Esophagus muscularis mucosa (tissue), 4 donors: ENCODE measurements at regions of chr4 and their contacts with region 1.

Region 1: DNA sequence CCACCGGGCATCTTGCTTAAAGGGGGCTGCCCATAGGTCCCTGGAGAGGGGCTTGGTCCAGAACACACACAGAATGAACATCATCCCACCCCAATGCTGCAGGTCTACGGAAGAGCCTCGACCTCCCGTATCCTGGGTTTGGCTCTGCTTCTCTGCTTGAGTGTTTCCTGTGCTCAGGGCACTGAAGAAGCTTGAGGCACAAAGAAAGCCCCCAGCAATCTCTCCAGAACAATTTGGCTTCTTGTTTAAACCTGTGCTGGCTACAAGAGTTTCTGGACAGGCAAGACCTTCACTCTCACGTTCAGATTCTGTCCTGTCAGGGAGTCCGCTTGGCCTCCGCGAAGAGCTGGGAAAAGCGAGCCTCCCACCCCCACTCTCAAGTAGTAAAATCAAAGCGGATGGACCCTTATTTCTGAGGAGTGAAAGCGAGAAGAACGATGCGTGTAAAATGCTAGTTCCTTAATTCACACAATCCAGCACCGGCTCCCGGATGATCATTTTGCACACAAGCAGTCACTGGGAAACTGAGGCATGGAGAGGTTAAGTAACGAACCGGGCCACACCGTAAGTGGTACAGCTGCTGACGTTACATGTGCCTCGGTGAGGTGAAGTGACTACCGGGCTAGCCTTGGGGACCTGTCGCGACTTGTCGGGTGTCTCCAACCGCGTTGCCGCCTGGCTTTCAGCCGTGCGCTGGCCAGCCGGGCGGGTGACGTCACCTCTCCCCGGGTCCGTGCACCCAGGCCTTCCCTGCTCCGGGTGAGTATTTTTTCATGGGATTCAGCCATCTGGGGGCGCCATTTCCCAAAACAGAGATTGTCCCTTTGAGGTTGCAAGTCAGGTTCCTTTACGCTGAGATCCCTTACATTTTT is 3.1 kb upstream of the SFRP2 start:
- DNase-seq: no peak
- H3K4me3 ChIP-seq: peak overlapping the region; percentile 42 to 48 (median 45)
- H3K27ac ChIP-seq: no peak overlapping the region
- H3K4me1 ChIP-seq: peaks cover 25 to 51% (median 45%) of the 10 kb centered on the region in 4 donors
- H3K27me3 ChIP-seq: peaks cover 0 to 63% (median 46%) of the 10 kb centered on the region in 4 donors
- CTCF ChIP-seq: peak in 1 of 3 experiments; percentile 18
- EP300 ChIP-seq: no peak
- POLR2A ChIP-seq: no peak

Region 2: GRCh38 chr4:154314248-154314647 is 522.3 kb after region 1 on chr4:
- intact Hi-C with region 1: loop called (anchors 5 kb)
- DNase-seq: no peak
- H3K4me3 ChIP-seq: no peak overlapping the region
- H3K27ac ChIP-seq: no peak overlapping the region
- H3K4me1 ChIP-seq: no peaks in the 10 kb centered on the region
- H3K27me3 ChIP-seq: no peaks in the 10 kb centered on the region
- CTCF ChIP-seq: peak in 2 of 3 experiments; percentile 16 to 42
- EP300 ChIP-seq: no peak
- POLR2A ChIP-seq: no peak